ENCODE measurements at regions of chr11 and their contacts with region 1.

Region 1: GRCh38 chr11:64688534-64688982 is 34.4 kb downstream of the NRXN2 start:
- DNase-seq: peak; percentile 90
- H3K4me3 ChIP-seq: peak overlapping the region; percentile 47 to 50; a peak in 3 of 4 replicates
- H3K27ac ChIP-seq: peak overlapping the region in 1 of 2 experiments; percentile 96; a peak in 2 of 4 replicates
- H3K4me1 ChIP-seq: peaks cover 0 to 34% of the 10 kb centered on the region in 2 experiments; a peak in 2 of 4 replicates
- H3K27me3 ChIP-seq: peaks cover 13% of the 10 kb centered on the region; the same call in 1 of the 2 replicates
- CTCF ChIP-seq: peak; percentile 94
- EP300 ChIP-seq: no peak; a peak in 1 of 4 replicates
- RAD21 ChIP-seq: peak; percentile 81

Region 2: DNA sequence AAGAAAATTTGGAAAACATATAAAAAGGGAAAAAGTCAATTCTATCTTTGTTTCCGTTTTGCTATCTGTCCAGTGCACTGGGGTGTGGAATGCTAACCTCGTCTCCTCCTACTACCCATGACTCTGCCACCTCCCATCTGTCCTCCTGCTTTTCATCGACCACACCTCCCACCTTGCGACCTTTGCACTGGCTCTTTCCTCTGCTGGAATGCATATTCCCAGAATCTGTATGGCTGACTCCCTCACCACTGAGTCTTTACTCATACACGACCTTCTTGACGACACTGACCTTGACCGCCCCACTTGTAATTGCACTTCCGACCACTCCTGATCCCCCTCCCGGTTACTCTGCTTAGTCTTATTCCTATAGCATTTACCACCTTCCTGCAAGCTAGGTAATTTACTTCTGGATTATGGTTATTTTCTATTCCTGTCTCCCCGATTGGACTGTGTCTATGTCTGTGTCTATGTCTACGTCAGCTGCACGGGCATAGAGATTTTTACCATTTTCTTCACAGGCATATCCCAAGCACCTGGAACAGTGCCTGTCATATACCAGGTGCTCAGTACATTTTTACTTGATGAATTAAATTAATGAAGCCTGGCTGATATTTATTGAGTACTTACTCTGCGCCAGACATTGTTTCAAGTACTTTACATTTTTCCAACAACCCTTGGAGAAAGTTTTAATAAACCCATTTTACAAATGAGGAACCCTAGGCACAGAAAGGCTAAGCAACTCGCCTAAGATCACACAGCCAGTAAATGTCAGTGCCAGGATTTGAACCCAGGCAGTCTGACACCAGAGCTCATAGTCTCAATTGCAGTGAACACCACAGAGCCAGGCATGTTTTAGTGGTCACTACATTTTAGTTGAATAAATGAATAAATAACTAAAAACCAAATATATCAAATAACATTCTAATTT is 186.8 kb before region 1 on chr11:
- CTCF ChIA-PET with region 1: no interaction called
- POLR2A ChIA-PET with region 1: no interaction called
- DNase-seq: no peak
- H3K4me3 ChIP-seq: no peak overlapping the region
- H3K27ac ChIP-seq: peak overlapping the region in 1 of 2 experiments; percentile 50; a peak in 2 of 4 replicates
- H3K4me1 ChIP-seq: peaks cover 0 to 3% of the 10 kb centered on the region in 2 experiments; a peak in 1 of 4 replicates
- H3K27me3 ChIP-seq: no peaks in the 10 kb centered on the region; the same call in 1 of the 2 replicates
- CTCF ChIP-seq: no peak
- EP300 ChIP-seq: no peak
- RAD21 ChIP-seq: no peak

Region 3: GRCh38 chr11:64652586-64653387 is 35.8 kb before region 1 on chr11:
- CTCF ChIA-PET with region 1: interaction called, 11 read pairs
- POLR2A ChIA-PET with region 1: no interaction called
- DNase-seq: peak; percentile 93
- H3K4me3 ChIP-seq: no peak overlapping the region; a peak in 1 of 4 replicates
- H3K27ac ChIP-seq: no peak overlapping the region
- H3K4me1 ChIP-seq: peaks cover 0 to 7% of the 10 kb centered on the region in 2 experiments; a peak in 1 of 4 replicates
- H3K27me3 ChIP-seq: no peaks in the 10 kb centered on the region
- CTCF ChIP-seq: peak; percentile 83
- EP300 ChIP-seq: no peak
- RAD21 ChIP-seq: peak; percentile 93

Region 4: DNA sequence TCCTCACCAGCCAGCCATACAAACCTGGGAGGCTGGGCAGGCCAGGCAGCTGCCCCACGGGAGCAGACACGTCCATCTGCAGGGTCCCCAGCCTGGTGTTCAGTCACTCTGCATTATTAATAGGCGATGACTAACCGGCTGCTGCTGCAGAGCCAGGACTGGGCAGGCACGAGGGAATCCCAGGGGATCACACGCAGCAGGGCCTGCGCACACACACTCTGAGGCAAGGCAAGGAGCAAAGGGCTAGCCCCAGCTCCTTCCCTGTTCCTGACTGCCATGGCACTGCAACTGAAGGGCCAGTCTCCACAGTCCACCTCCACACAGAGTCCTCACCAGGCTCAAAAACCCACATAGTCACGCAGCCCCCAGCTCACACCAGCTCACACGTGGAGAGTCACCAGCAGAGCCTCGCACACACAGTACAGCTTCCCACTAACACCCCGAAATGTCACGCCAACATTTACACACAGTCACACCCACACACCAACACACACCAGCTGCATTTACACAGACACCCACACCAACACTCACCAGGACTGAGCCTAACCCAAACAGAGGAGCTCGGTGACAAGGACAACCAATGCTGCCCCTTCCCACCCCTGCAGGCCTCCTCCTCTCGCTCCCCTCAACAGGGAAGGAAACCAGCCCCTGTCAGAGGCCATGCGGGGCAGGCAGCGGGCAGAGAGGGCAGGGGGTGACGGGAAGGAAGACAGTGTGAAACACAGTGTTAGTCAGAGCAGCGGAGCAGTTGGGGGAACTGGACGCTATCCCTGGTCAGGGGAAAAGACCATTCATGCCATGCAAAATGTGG is 12.9 kb before region 1 on chr11:
- CTCF ChIA-PET with region 1: interaction called, 26 read pairs
- POLR2A ChIA-PET with region 1: no interaction called
- DNase-seq: peak; percentile 59
- H3K4me3 ChIP-seq: no peak overlapping the region
- H3K27ac ChIP-seq: no peak overlapping the region; a peak in 1 of 4 replicates
- H3K4me1 ChIP-seq: peaks cover 9 to 15% of the 10 kb centered on the region in 2 experiments; a peak in 1 of 4 replicates
- H3K27me3 ChIP-seq: peaks cover 35% of the 10 kb centered on the region
- CTCF ChIP-seq: no peak
- EP300 ChIP-seq: no peak
- RAD21 ChIP-seq: no peak

Region 5: GRCh38 chr11:64710418-64711137 is 22.0 kb after region 1 on chr11:
- CTCF ChIA-PET with region 1: interaction called, 68 read pairs
- POLR2A ChIA-PET with region 1: interaction called, 3 read pairs
- DNase-seq: no peak
- H3K4me3 ChIP-seq: no peak overlapping the region
- H3K27ac ChIP-seq: peak overlapping the region in 1 of 2 experiments; percentile 40; a peak in 1 of 4 replicates
- H3K4me1 ChIP-seq: peaks cover 0 to 17% of the 10 kb centered on the region in 2 experiments; a peak in 3 of 4 replicates
- H3K27me3 ChIP-seq: no peaks in the 10 kb centered on the region
- CTCF ChIP-seq: no peak
- EP300 ChIP-seq: no peak
- RAD21 ChIP-seq: no peak

Region 6: DNA sequence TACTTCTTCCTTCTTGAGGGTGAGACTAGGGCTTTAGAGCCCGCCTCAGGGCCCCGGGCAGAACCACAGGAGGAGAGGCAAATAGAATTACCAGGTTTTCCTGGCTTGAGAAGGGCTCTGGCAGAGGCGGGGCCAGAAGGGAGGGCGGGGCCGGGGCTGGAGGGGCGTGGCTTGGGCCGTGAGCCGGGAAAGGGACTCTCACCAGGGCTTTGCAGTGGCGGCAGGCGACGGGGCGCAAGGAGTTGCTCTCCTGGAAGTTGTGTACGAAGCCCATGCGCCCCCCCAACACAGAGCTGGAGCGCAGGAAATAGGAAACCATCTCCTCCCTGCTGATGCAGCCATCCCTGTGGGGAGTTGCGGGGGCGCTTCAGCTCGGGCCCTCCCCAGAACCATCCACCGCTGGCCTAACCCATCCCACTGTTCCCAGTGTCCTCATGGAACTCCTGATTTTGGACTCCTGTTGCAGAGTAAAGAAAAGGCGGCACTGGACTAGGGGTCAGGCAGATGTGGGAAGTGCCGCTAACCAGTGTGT is 41.4 kb after region 1 on chr11:
- CTCF ChIA-PET with region 1: interaction called, 17 read pairs
- POLR2A ChIA-PET with region 1: no interaction called
- DNase-seq: peak; percentile 87
- H3K4me3 ChIP-seq: no peak overlapping the region
- H3K27ac ChIP-seq: no peak overlapping the region
- H3K4me1 ChIP-seq: peaks cover 0 to 6% of the 10 kb centered on the region in 2 experiments; a peak in 1 of 4 replicates
- H3K27me3 ChIP-seq: no peaks in the 10 kb centered on the region
- CTCF ChIP-seq: no peak
- EP300 ChIP-seq: no peak
- RAD21 ChIP-seq: no peak

Region 7: GRCh38 chr11:64742889-64743590 is 54.5 kb after region 1 on chr11:
- CTCF ChIA-PET with region 1: interaction called, 48 read pairs
- POLR2A ChIA-PET with region 1: interaction called, 4 read pairs
- DNase-seq: peak; percentile 93
- H3K4me3 ChIP-seq: peak overlapping the region; percentile 49 to 50
- H3K27ac ChIP-seq: no peak overlapping the region
- H3K4me1 ChIP-seq: peaks cover 16 to 17% of the 10 kb centered on the region in 2 experiments; a peak in 2 of 4 replicates
- H3K27me3 ChIP-seq: peaks cover 8% of the 10 kb centered on the region; the same call in 1 of the 2 replicates
- CTCF ChIP-seq: peak; percentile 73
- EP300 ChIP-seq: no peak
- RAD21 ChIP-seq: peak; percentile 50